ENCODE measurements at regions of chr4 and their contacts with region 1.

Region 1: DNA sequence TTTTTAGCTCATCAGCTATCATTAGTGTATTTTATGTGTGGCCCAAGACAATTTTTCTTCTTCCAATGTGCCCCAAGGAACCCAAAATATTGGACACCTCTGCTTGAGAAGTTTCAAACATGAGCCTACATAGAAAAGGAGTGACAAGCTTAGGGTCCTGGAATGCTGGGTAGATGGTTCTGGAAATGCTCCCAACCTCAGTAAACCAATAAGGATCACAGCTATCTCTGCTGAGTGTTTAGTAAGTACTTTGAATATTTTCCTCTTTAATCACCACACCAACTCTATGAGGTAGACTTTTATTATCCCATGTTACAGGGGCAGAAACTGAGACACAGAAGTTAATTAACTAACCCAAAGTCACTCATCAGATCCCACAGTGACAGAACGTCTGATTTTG is 164.9 kb upstream of the KLF3 start:
- DNase-seq: no peak
- ATAC-seq: no peak
- H3K4me3 ChIP-seq: no peak overlapping the region
- H3K27ac ChIP-seq: no peak overlapping the region
- H3K4me1 ChIP-seq: no peaks in the 10 kb centered on the region
- H3K27me3 ChIP-seq: no peaks in the 10 kb centered on the region
- CTCF ChIP-seq: no peak

Region 2: GRCh38 chr4:38223782-38224236 is 275.3 kb before region 1 on chr4:
- CTCF ChIA-PET with region 1: no interaction called
- POLR2A ChIA-PET with region 1: interaction called, 15 read pairs
- in situ Hi-C with region 1: no loop called
- intact Hi-C with region 1: no loop called
- DNase-seq: no peak
- ATAC-seq: no peak
- H3K4me3 ChIP-seq: no peak overlapping the region
- H3K27ac ChIP-seq: no peak overlapping the region
- H3K4me1 ChIP-seq: no peaks in the 10 kb centered on the region
- H3K27me3 ChIP-seq: no peaks in the 10 kb centered on the region
- CTCF ChIP-seq: no peak

Measured in Panc1 (cell line).